Right cardiac atrium (tissue), 5 donors: ENCODE measurements at regions of chr12 and their contacts with region 1.

Region 1: DNA sequence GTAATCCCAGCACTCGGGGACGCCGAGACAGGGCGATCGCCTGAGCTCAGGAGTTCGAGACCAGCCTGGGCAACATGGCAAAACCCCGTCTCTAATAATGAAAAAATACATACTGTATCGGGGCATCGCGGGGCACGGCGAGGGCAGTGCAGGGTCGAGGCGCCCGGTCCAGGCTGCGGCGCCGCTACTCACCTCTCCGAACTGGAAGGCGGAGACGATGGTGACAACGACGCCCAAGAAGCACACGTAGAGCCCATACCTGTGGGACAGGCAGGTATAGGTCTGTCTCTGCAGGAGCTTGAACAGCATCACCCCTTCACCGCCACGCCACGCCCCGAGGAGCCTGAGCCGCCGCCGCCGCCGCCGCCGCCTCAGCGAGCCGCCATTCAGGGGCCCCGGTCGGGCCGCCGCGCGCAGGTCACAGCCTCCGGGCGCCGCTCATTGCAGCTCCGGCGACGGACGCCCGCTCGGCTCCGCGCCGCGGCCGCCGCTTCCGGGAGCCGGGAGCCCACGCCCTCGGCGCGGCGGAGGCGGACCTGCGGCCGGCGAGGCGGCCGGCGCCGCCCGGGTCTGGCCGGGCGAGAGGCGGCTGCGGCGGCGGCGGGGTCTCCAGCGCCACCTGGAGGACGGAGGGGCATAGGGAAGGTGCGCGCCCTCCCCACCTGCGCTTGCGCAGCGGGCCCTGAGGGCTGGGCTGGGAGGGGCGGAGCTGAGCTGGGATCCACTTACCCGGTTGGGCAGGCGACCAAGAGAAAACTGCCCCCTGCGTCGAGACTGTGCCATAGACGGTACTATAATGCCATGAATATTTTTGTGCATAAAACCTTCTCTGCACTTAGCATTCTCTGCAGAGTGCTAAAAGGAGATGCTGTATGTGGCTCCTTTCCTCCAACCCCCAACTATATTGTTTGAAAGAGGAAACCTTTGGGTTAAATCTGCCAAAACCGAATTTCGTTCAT is at the start of gene GNPTAB:
- DNase-seq: peak; percentile 94 to 97 (median 97)
- ATAC-seq: peak; percentile 99
- H3K4me3 ChIP-seq: peak within 1 kb of the TSS; percentile 98
- H3K27ac ChIP-seq: peak within 1 kb of the TSS; percentile 80
- H3K4me1 ChIP-seq: no peaks in the 10 kb centered on the region
- H3K27me3 ChIP-seq: no peaks in the 10 kb centered on the region
- total RNA-seq, gene GNPTAB: 46.7 to 53.6 (median 50.7) TPM

Region 2: DNA sequence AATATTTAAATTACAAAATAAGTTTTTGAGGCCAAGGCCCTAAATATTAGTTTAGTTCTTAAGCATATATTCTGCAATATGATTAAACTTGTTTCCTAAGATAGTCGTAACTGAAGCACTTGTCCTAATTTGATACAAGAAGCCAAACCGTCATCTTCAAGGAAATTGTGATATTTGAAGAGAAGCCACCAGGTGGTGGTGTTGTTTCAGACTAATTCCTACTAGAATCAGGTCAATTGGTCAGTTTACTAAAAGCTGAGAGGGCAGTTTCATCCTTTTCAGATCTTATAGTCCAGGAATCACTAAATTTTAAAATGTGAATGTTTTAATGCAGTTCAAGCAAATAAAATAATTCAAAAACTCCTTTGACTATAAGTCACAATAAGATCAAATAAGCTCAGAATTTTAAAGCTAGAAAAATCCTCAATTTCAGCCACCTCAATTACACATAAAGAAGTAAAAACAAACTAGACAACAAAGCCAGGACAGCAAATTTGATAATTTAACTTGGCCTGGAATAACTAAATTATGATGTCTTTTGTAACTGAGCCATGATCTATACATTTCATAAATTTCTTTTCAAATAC is 416.0 kb before region 1 on chr12:
- intact Hi-C with region 1: loop called in 1 of 4 experiments (anchors 10 kb)
- DNase-seq: no peak
- ATAC-seq: peak in 1 of 2 donors; percentile 46
- H3K4me3 ChIP-seq: no peak overlapping the region
- H3K27ac ChIP-seq: no peak overlapping the region
- H3K4me1 ChIP-seq: no peaks in the 10 kb centered on the region
- H3K27me3 ChIP-seq: no peaks in the 10 kb centered on the region

Region 3: GRCh38 chr12:101490286-101490920 is 340.2 kb before region 1 on chr12:
- intact Hi-C with region 1: loop called in 1 of 4 experiments (anchors 10 kb)
- DNase-seq: no peak
- ATAC-seq: peak; percentile 51 to 63
- H3K4me3 ChIP-seq: no peak overlapping the region
- H3K27ac ChIP-seq: no peak overlapping the region
- H3K4me1 ChIP-seq: no peaks in the 10 kb centered on the region
- H3K27me3 ChIP-seq: no peaks in the 10 kb centered on the region

Region 4: GRCh38 chr12:101773650-101774162 is 56.9 kb before region 1 on chr12:
- intact Hi-C with region 1: loop called in 3 of 4 experiments (anchors 1 to 5 kb)
- DNase-seq: peak; percentile 47 to 72 (median 59)
- ATAC-seq: peak; percentile 71 to 79
- H3K4me3 ChIP-seq: no peak overlapping the region
- H3K27ac ChIP-seq: no peak overlapping the region
- H3K4me1 ChIP-seq: peaks cover 6% of the 10 kb centered on the region
- H3K27me3 ChIP-seq: no peaks in the 10 kb centered on the region